ENCODE measurements at regions of chr1 and their contacts with region 1.

Region 1: GRCh38 chr1:110196917-110197765 is 13.0 kb upstream of the KCNC4 start:
- DNase-seq: peak; percentile 42
- ATAC-seq: peak; percentile 90
- H3K4me3 ChIP-seq: no peak overlapping the region
- H3K27ac ChIP-seq: no peak overlapping the region
- H3K4me1 ChIP-seq: no peaks in the 10 kb centered on the region
- H3K27me3 ChIP-seq: peaks cover 7 to 26% of the 10 kb centered on the region in 2 experiments; a peak in 3 of 5 replicates
- CTCF ChIP-seq: peak; percentile 86
- EP300 ChIP-seq: no peak
- POLR2A ChIP-seq: no peak
- RAD21 ChIP-seq: peak; percentile 23; the same call in 1 of the 2 replicates

Region 2: GRCh38 chr1:109864930-109865612 is 332.1 kb before region 1 on chr1:
- CTCF ChIA-PET with region 1: no interaction called
- POLR2A ChIA-PET with region 1: no interaction called
- in situ Hi-C with region 1: no loop called
- intact Hi-C with region 1: no loop called
- DNase-seq: no peak
- ATAC-seq: no peak
- H3K4me3 ChIP-seq: no peak overlapping the region
- H3K27ac ChIP-seq: no peak overlapping the region
- H3K4me1 ChIP-seq: no peaks in the 10 kb centered on the region
- H3K27me3 ChIP-seq: 0 out of 5 replicates have a peak, but pooled peaks cover 0 to 4% of the 10 kb centered on the region in 2 experiments
- CTCF ChIP-seq: no peak
- EP300 ChIP-seq: no peak
- POLR2A ChIP-seq: no peak
- RAD21 ChIP-seq: no peak

Region 3: GRCh38 chr1:110460253-110461220 is 263.4 kb after region 1 on chr1:
- CTCF ChIA-PET with region 1: interaction called, 10 read pairs
- POLR2A ChIA-PET with region 1: no interaction called
- in situ Hi-C with region 1: loop called (anchors 5 kb)
- intact Hi-C with region 1: no loop called
- DNase-seq: peak; percentile 69
- ATAC-seq: peak; percentile 78
- H3K4me3 ChIP-seq: no peak overlapping the region
- H3K27ac ChIP-seq: no peak overlapping the region
- H3K4me1 ChIP-seq: 0 out of 2 replicates have a peak, but pooled peaks cover 7% of the 10 kb centered on the region
- H3K27me3 ChIP-seq: peaks cover 0 to 4% of the 10 kb centered on the region in 2 experiments; a peak in 1 of 5 replicates
- CTCF ChIP-seq: peak; percentile 91
- EP300 ChIP-seq: no peak
- POLR2A ChIP-seq: no peak
- RAD21 ChIP-seq: peak; percentile 84

Region 4: DNA sequence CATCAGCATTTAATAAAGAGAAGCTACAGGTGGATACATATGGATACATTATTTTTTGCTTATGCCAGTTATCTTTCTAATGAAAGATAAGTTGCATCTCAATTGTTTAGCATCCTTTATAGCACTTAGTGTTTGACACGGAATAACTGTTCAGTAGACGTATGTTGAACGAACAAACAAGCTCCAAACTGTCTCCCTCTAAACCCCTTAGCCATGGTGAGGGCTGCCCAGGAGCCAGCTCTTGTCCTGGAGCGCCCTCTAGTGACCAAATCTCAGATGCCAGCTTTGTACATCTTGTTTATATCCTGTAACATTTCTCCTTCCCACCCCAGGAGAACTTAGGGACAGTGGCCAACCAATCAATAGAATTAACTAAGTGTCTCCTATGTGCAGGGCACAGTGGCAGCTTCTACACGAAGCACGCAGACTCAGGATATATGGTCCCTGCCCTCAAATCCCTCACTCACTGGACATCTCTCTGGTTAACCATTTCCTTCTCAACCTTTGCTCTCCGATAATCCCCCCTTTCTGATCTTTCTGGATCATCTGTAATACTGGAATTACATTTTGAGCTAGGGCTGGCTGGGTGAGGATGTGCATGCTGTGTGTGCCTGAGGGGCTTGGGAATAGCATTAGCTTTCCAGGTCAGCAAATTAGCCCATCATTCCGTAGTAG is 298.9 kb after region 1 on chr1:
- CTCF ChIA-PET with region 1: interaction called, 5 read pairs
- POLR2A ChIA-PET with region 1: no interaction called
- in situ Hi-C with region 1: loop called (anchors 10 kb)
- intact Hi-C with region 1: loop called (anchors 2 kb)
- DNase-seq: peak; percentile 56
- ATAC-seq: peak; percentile 94
- H3K4me3 ChIP-seq: no peak overlapping the region
- H3K27ac ChIP-seq: no peak overlapping the region
- H3K4me1 ChIP-seq: no peaks in the 10 kb centered on the region
- H3K27me3 ChIP-seq: no peaks in the 10 kb centered on the region; a peak in 1 of 5 replicates
- CTCF ChIP-seq: peak; percentile 87
- EP300 ChIP-seq: no peak
- POLR2A ChIP-seq: no peak
- RAD21 ChIP-seq: peak; percentile 86